Naive thymus-derived CD4-positive, alpha-beta T cell (primary cell): ENCODE measurements at regions of chr1 and their contacts with region 1.

Region 1: GRCh38 chr1:150629115-150629928 is at the start of gene ENSA:
- DNase-seq: peak; percentile 85 to 99 (median 98)
- ATAC-seq: peak; percentile 91
- H3K4me3 ChIP-seq: peak within 1 kb of the TSS; percentile 88
- H3K4me3 Mint-ChIP-seq: no peak within 1 kb of the TSS
- H3K27ac ChIP-seq: peak within 1 kb of the TSS; percentile 98
- H3K27ac Mint-ChIP-seq: peak within 1 kb of the TSS in 2 of 9 donors; percentile 4 to 71
- H3K4me1 ChIP-seq: peaks cover 15 to 18% of the 10 kb centered on the region in 2 donors
- H3K4me1 Mint-ChIP-seq: peaks cover 0 to 40% (median 17%) of the 10 kb centered on the region in 7 donors
- H3K27me3 ChIP-seq: no peaks in the 10 kb centered on the region
- H3K27me3 Mint-ChIP-seq: no peaks in the 10 kb centered on the region
- total RNA-seq, gene ENSA: 97.2 to 178 (median 157) TPM

Region 2: DNA sequence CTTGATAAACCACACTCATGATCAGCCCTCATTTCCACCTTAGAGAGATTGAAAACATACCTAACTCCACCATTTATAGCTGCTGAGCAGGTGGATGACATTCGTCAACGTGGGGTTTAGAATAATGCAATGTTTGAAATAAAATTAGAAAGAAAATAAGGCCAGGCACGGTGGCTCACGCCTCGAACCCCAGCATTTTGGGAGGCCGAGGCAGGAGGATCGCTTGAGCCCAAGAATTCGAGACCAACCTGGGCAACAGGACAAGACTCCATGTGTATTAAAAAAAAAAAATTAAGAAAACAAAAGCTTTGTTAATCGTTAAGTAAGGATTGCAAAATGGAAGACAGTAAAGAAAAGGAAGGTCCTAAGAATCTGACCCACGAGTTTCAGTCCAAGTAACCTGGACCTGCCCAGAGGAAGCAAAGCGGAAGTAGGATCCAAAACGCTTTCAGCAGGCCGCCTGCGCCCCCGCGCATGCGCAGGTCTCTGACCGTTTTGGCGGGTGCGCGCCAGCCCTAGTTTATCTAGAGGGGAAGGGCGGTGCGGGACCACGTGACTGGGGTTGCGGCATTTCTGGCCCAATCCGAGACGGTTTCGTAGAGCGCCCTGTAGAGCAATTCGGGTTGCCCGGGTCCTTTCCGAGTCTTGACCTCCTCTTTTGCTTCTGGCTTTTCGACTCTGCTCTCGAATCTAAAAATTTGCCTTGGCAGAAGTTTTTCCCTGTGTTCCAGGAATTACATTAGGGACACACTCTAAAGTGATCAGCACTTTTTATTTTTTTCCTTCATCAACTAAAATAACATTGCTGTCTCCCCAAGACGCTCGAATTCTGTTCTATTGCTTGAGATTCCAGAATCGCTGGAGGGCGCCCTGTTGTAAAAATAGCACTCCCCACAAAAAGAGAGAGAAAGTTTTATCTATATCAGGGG is 415.9 kb before region 1 on chr1:
- CTCF ChIA-PET with region 1: no interaction called
- POLR2A ChIA-PET with region 1: no interaction called
- intact Hi-C with region 1: loop called in 1 of 2 experiments (anchors 1 kb)
- DNase-seq: peak; percentile 72 to 92 (median 88)
- ATAC-seq: peak; percentile 100
- H3K4me3 ChIP-seq: peak overlapping the region; percentile 59
- H3K4me3 Mint-ChIP-seq: peak overlapping the region; percentile 75 to 95 (median 92)
- H3K27ac ChIP-seq: peak overlapping the region; percentile 69
- H3K27ac Mint-ChIP-seq: peak overlapping the region; percentile 84 to 98 (median 97)
- H3K4me1 ChIP-seq: peaks cover 6% of the 10 kb centered on the region in 2 donors
- H3K4me1 Mint-ChIP-seq: peaks cover 5 to 19% (median 18%) of the 10 kb centered on the region in 7 donors
- H3K27me3 ChIP-seq: no peaks in the 10 kb centered on the region
- H3K27me3 Mint-ChIP-seq: peaks cover 0 to 11% (median 0%) of the 10 kb centered on the region in 5 donors

Region 3: GRCh38 chr1:150363426-150364230 is 265.7 kb before region 1 on chr1 and contains the start of gene RPRD2:
- CTCF ChIA-PET with region 1: no interaction called
- POLR2A ChIA-PET with region 1: interaction called, 8 read pairs
- intact Hi-C with region 1: loop called (anchors 1 kb)
- DNase-seq: peak; percentile 83 to 100 (median 99)
- ATAC-seq: peak; percentile 97
- H3K4me3 ChIP-seq: peak within 1 kb of the TSS; percentile 99
- H3K4me3 Mint-ChIP-seq: peak within 1 kb of the TSS; percentile 86 to 100 (median 98)
- H3K27ac ChIP-seq: peak within 1 kb of the TSS; percentile 84
- H3K27ac Mint-ChIP-seq: peak within 1 kb of the TSS; percentile 95 to 100 (median 98)
- H3K4me1 ChIP-seq: peaks cover 10% of the 10 kb centered on the region in 2 donors
- H3K4me1 Mint-ChIP-seq: peaks cover 25 to 37% (median 32%) of the 10 kb centered on the region in 7 donors
- H3K27me3 ChIP-seq: no peaks in the 10 kb centered on the region
- H3K27me3 Mint-ChIP-seq: peaks cover 0 to 2% (median 0%) of the 10 kb centered on the region in 5 donors
- total RNA-seq, gene RPRD2: 33.2 to 62.2 (median 40.6) TPM

Region 4: DNA sequence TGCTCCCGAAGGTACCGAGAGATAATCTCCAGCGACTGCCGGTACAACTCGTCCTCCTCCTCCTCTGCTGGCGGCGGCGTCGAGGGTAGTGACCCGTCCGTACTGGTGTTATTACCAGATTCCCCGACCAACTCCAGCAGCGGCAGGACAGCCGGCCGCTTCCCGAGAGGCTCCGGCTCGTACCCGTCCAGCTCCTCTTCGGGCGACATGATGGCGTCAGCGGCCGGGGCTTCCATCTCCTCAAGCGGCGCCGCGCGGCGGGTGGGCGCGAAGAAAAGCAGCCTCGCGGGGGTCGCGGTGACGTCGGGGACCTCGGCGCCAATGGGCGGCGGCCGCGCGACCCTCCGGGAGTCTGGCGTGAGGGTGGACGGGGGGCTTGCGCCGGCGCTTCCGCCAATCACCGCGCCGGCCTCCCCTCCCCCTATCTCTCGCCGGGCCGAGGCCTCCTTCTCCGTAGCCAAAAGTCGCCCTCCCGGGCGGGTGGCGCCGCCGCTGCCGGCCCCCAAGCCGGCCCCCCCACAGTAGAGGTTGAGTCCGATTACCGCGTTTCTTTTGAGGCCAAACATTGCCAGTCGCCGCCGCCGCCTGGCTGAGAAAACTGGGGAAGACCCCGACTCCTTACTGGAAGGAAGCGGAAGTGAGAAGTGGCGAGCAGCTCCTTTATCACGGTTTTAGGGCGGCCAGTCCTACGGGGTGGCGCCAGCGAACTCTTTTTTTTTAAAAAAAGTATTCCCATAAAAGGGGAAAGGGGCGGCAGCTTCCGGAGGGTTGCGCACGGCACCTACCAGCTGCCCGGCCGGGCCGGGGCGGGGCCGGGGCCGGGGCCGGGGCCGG is 50.1 kb before region 1 on chr1 and contains the start of gene MCL1:
- CTCF ChIA-PET with region 1: interaction called, 6 read pairs
- POLR2A ChIA-PET with region 1: interaction called, 92 read pairs
- intact Hi-C with region 1: loop called (anchors 1 kb)
- DNase-seq: peak; percentile 75 to 88 (median 83)
- ATAC-seq: peak; percentile 90
- H3K4me3 ChIP-seq: peak within 1 kb of the TSS; percentile 95
- H3K4me3 Mint-ChIP-seq: peak within 1 kb of the TSS; percentile 92 to 99 (median 95)
- H3K27ac ChIP-seq: peak within 1 kb of the TSS; percentile 97
- H3K27ac Mint-ChIP-seq: peak within 1 kb of the TSS; percentile 96 to 99 (median 98)
- H3K4me1 ChIP-seq: peaks cover 3 to 15% of the 10 kb centered on the region in 2 donors
- H3K4me1 Mint-ChIP-seq: peaks cover 25 to 39% (median 29%) of the 10 kb centered on the region in 7 donors
- H3K27me3 ChIP-seq: no peaks in the 10 kb centered on the region
- H3K27me3 Mint-ChIP-seq: peaks cover 0 to 7% (median 0%) of the 10 kb centered on the region in 5 donors
- total RNA-seq, gene MCL1: 302 to 1,400 (median 377) TPM

Region 5: DNA sequence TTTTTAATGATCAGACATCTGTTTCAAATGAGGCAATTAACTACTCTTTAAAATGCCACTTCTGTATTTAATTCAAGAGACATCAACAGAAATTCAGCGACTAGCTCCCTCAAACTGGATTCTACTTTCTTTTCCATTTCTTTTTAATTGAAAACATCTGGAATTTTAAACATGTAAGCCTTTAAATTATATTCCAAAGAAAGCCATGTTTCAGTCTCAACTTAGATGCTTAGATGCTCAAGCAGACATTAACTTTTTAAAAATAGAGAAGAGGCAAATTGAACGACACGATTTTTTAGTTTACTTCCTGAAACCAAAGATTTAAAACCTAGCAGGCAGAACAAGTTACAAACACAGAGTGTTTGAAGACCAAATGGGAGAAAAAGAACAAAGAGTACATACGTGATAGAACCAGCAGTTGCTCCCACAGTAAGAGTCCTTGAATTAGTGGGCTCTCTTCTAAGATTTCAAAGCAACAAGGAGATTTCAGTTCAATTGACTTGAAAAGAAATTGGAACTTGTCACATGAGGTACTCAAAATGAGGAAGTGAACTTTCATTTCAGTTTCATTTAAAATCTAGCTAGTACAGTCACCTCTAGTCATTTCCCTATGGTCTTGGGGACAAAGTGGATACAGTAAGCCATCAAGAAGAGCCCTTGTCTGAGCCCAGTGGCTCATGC is 136.1 kb after region 1 on chr1 and contains the start of gene CTSS:
- CTCF ChIA-PET with region 1: no interaction called
- POLR2A ChIA-PET with region 1: no interaction called
- intact Hi-C with region 1: loop called in 1 of 2 experiments (anchors 2 kb)
- DNase-seq: peak in 6 of 9 donors; percentile 37 to 55 (median 43)
- ATAC-seq: peak; percentile 86
- H3K4me3 ChIP-seq: peak within 1 kb of the TSS; percentile 60
- H3K4me3 Mint-ChIP-seq: peak within 1 kb of the TSS; percentile 87 to 98 (median 93)
- H3K27ac ChIP-seq: peak within 1 kb of the TSS; percentile 82
- H3K27ac Mint-ChIP-seq: peak within 1 kb of the TSS; percentile 83 to 99 (median 96)
- H3K4me1 ChIP-seq: peaks cover 9 to 15% of the 10 kb centered on the region in 2 donors
- H3K4me1 Mint-ChIP-seq: peaks cover 36 to 68% (median 52%) of the 10 kb centered on the region in 7 donors
- H3K27me3 ChIP-seq: no peaks in the 10 kb centered on the region
- H3K27me3 Mint-ChIP-seq: peaks cover 0 to 8% (median 0%) of the 10 kb centered on the region in 5 donors
- total RNA-seq, gene CTSS: 91.1 to 1,020 (median 106) TPM

Region 6: GRCh38 chr1:151070474-151071276 is 441.4 kb after region 1 on chr1 and contains the start of gene GABPB2:
- CTCF ChIA-PET with region 1: no interaction called
- POLR2A ChIA-PET with region 1: interaction called, 3 read pairs
- intact Hi-C with region 1: loop called in 1 of 2 experiments (anchors 1 kb)
- DNase-seq: peak; percentile 78 to 94 (median 89)
- ATAC-seq: peak; percentile 91
- H3K4me3 ChIP-seq: peak within 1 kb of the TSS; percentile 99
- H3K4me3 Mint-ChIP-seq: peak within 1 kb of the TSS; percentile 94 to 100 (median 99)
- H3K27ac ChIP-seq: peak within 1 kb of the TSS; percentile 94
- H3K27ac Mint-ChIP-seq: peak within 1 kb of the TSS; percentile 97 to 100 (median 100)
- H3K4me1 ChIP-seq: peaks cover 8 to 9% of the 10 kb centered on the region in 2 donors
- H3K4me1 Mint-ChIP-seq: peaks cover 5 to 37% (median 29%) of the 10 kb centered on the region in 7 donors
- H3K27me3 ChIP-seq: no peaks in the 10 kb centered on the region
- H3K27me3 Mint-ChIP-seq: peaks cover 0 to 2% (median 0%) of the 10 kb centered on the region in 5 donors
- total RNA-seq, gene GABPB2: 13.7 to 42.2 (median 32.2) TPM